ENCODE measurements at regions of chr10 and their contacts with region 1.

Region 1: GRCh38 chr10:48670978-48671913 is 13.4 kb upstream of the WDFY4 start:
- DNase-seq: peak; percentile 88
- ATAC-seq: peak; percentile 68
- H3K4me3 Mint-ChIP-seq: peak overlapping the region; percentile 74
- H3K27ac Mint-ChIP-seq: peak overlapping the region; percentile 98
- H3K4me1 Mint-ChIP-seq: peaks cover 76% of the 10 kb centered on the region
- H3K27me3 Mint-ChIP-seq: no peaks in the 10 kb centered on the region
- CTCF ChIP-seq: no peak

Region 2: GRCh38 chr10:48577158-48577557 is 94.1 kb before region 1 on chr10:
- CTCF ChIA-PET with region 1: no interaction called
- POLR2A ChIA-PET with region 1: no interaction called
- intact Hi-C with region 1: loop called (anchors 1 kb)
- DNase-seq: no peak
- ATAC-seq: peak; percentile 65
- H3K4me3 Mint-ChIP-seq: peak overlapping the region; percentile 41
- H3K27ac Mint-ChIP-seq: peak overlapping the region; percentile 82
- H3K4me1 Mint-ChIP-seq: peaks cover 92% of the 10 kb centered on the region
- H3K27me3 Mint-ChIP-seq: no peaks in the 10 kb centered on the region
- CTCF ChIP-seq: no peak

Region 3: DNA sequence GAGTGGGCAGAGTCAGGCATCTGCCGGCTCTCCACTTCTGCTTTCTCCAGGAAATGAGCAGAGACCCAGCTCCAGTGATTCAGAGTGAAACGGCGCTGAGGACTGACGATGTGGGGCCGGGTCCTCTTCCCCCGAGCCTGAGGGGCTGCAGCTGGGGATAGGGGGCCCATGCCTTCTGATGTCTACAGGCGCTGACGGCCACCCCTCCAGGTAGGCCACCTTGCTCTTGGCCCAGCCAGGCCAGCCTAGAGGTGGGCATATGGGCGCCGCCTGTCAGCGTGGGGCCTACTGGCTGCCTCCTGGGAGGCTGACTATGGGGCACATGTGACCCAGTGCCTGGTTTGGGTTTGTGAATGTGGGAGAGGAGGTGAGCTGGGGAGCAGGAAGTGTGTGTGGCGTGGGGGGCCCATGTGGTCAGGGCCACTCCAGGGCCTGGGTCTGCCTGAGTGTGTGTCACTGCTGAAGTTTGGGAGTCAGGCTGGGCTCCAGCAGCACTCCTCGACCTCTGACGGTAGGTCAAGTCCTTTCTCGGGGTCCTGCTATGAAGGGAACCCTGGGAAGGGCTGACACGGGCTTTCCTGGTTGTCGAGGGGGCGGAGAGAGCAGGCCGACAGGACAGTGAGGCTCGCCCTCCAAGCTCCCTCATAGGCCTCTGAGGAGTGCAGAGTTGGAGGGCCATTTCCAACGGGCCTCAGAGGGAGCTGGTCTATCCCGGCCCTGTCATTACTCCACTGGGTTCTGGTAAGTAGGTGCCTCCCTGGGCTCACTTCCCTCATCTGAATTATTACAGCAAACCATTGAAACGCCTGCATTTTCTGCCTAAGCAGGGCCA is 13.8 kb after region 1 on chr10 and contains the start of gene WDFY4:
- CTCF ChIA-PET with region 1: interaction called, 20 read pairs
- POLR2A ChIA-PET with region 1: interaction called, 536 read pairs
- intact Hi-C with region 1: loop called (anchors 1 kb)
- DNase-seq: peak; percentile 68
- ATAC-seq: peak; percentile 78
- H3K4me3 Mint-ChIP-seq: peak within 1 kb of the TSS; percentile 94
- H3K27ac Mint-ChIP-seq: peak within 1 kb of the TSS; percentile 98
- H3K4me1 Mint-ChIP-seq: peaks cover 79% of the 10 kb centered on the region
- H3K27me3 Mint-ChIP-seq: no peaks in the 10 kb centered on the region
- CTCF ChIP-seq: no peak
- total RNA-seq, gene WDFY4: 480 and 488 TPM in 2 replicates

Region 4: DNA sequence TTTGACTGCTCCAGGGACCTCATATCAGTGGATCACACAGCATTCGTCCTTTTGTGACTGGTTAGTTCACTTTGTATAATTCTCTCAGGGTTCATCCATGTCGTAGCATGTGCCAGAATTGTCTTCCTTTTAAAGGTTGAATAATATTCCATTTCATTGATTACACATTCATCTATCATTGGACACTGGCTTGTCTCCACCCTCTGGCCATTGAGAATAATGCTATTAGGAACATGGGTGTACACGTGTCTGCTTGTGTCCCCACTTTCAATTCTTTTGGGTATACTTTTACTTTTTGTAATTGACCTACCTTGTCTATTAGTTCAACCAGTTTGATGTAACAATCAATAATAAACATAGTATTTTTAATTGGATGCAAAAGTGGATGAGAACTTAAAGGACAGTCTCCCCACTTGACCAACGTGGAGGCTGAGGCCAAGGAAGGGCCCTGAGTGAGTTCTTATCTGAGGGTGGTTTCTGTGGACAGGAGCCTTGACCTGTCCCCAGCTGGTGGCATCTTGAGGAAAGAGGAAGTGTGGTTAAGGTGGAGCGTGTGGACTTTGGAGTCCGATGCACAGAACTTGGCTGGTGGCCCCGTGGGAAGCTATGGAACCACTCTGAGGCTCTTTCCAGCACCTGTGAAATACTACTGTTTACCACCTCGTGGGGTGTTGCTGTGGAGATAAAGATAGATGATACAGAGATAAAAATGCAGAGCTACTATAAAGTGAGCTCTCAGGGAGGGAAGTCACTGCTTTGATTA is 30.1 kb after region 1 on chr10:
- CTCF ChIA-PET with region 1: interaction called, 16 read pairs
- POLR2A ChIA-PET with region 1: interaction called, 30 read pairs
- intact Hi-C with region 1: loop called (anchors 1 kb)
- DNase-seq: no peak
- ATAC-seq: peak; percentile 44
- H3K4me3 Mint-ChIP-seq: peak overlapping the region; percentile 26
- H3K27ac Mint-ChIP-seq: peak overlapping the region; percentile 80
- H3K4me1 Mint-ChIP-seq: peaks cover 98% of the 10 kb centered on the region
- H3K27me3 Mint-ChIP-seq: no peaks in the 10 kb centered on the region
- CTCF ChIP-seq: no peak

Region 5: DNA sequence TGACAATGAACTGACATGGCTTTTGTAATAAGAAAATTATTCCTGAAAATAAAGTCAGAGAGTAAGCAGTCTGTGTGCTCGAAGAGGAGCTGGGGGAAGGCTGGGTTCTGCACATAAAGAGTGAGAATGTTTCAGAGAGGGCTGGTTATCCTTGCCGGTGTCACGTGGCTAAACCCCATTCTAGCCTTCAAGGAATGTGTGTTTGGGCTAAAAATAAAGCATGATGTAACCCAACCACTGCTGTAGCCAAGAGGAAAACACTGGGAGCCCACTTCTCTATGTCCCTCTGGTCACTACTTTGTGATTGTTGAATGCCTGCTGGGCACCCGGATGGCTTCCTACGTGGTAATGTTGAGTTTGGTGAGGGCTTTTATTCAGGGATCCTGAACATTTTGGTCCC is 36.9 kb after region 1 on chr10:
- CTCF ChIA-PET with region 1: interaction called, 4 read pairs
- POLR2A ChIA-PET with region 1: interaction called, 20 read pairs
- intact Hi-C with region 1: no loop called
- DNase-seq: no peak
- ATAC-seq: no peak
- H3K4me3 Mint-ChIP-seq: no peak overlapping the region
- H3K27ac Mint-ChIP-seq: peak overlapping the region; percentile 30
- H3K4me1 Mint-ChIP-seq: peaks cover 82% of the 10 kb centered on the region
- H3K27me3 Mint-ChIP-seq: no peaks in the 10 kb centered on the region
- CTCF ChIP-seq: no peak

Region 6: DNA sequence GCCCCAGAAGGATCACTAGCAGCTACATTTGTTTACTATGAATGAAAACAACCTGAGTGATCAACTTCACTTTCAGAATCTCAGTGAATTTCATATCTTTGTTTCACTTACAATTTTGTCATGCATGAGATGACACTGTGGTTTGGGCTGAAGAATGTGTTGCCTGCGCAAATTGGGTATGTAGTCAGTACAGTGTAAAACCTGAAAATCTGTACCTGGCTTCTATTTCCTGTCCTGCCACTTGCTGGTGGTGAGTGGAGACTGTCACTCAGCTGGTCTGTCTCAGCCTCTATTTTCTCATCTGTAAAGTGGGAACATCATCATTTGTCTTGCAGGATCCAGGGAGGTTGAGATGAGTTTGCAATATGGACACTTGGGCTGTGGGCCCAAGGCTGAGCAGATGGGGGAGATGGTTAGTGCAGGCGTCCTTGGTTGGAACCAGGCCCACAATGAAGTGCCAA is 131.4 kb after region 1 on chr10:
- CTCF ChIA-PET with region 1: no interaction called
- POLR2A ChIA-PET with region 1: interaction called, 8 read pairs
- intact Hi-C with region 1: loop called (anchors 1 kb)
- DNase-seq: no peak
- ATAC-seq: peak; percentile 75
- H3K4me3 Mint-ChIP-seq: peak overlapping the region; percentile 44
- H3K27ac Mint-ChIP-seq: peak overlapping the region; percentile 92
- H3K4me1 Mint-ChIP-seq: peaks cover 78% of the 10 kb centered on the region
- H3K27me3 Mint-ChIP-seq: no peaks in the 10 kb centered on the region
- CTCF ChIP-seq: no peak

Measured in activated B cell treated with CpG ODN at 0.5 μM for 24 hours (primary cell).